Heart left ventricle (tissue), 16 donors: ENCODE measurements at regions of chr19 and their contacts with region 1.

Region 1: GRCh38 chr19:32224371-32225244 is 120.8 kb upstream of the ZNF507 start:
- DNase-seq: peak; percentile 48 to 75 (median 61)
- ATAC-seq: peak in 3 of 4 donors; percentile 83 to 93 (median 93)
- H3K4me3 ChIP-seq: peak overlapping the region in 10 of 12 donors; percentile 16 to 51 (median 36)
- H3K27ac ChIP-seq: no peak overlapping the region
- H3K4me1 ChIP-seq: peaks cover 0 to 9% (median 4%) of the 10 kb centered on the region in 12 donors
- H3K27me3 ChIP-seq: peaks cover 0 to 65% (median 16%) of the 10 kb centered on the region in 9 donors
- CTCF ChIP-seq: peak; percentile 98 to 100 (median 100)
- POLR2A ChIP-seq: no peak

Region 2: GRCh38 chr19:30669329-30670010 is 1555.1 kb before region 1 on chr19:
- intact Hi-C with region 1: loop called in 4 of 10 experiments (anchors 5 kb)
- DNase-seq: peak; percentile 30 to 84 (median 57)
- ATAC-seq: peak in 3 of 4 donors; percentile 12 to 26 (median 21)
- H3K4me3 ChIP-seq: no peak overlapping the region
- H3K27ac ChIP-seq: no peak overlapping the region
- H3K4me1 ChIP-seq: peaks cover 0 to 25% (median 6%) of the 10 kb centered on the region in 12 donors
- H3K27me3 ChIP-seq: peaks cover 0 to 36% (median 11%) of the 10 kb centered on the region in 9 donors
- CTCF ChIP-seq: peak; percentile 61 to 85 (median 81)
- POLR2A ChIP-seq: no peak

Region 3: DNA sequence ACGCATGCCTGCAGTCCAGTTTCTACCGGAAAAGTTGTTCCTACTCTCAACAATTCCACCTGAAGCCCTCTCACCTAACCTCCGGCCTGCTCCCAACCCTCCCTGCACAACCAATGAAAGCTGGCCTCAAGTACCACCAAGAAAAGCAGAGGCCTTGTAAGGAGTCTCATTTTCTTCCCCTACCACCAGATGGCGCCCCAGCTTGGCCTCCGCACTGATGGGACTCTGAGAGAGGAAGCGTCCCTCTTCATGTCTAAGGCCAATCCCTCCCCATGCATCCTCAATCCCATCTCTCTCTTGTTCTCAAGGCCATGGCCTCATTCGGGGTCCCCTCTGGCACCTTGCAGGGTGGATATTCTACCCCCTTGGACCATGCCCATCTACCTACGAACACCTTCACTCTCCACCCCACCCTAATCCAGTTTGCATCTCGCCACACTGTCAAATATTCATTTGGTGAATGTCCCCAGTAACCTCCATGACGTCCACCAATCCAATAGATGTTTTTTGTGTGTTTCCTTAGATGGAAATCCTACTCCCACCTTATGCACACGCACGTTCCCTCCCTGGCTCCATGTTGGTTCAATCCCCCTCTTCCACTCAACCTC is 1439.7 kb before region 1 on chr19:
- intact Hi-C with region 1: loop called in 5 of 10 experiments (anchors 5 to 10 kb)
- DNase-seq: peak; percentile 20 to 69 (median 44)
- ATAC-seq: peak in 3 of 4 donors; percentile 49 to 57 (median 54)
- H3K4me3 ChIP-seq: no peak overlapping the region
- H3K27ac ChIP-seq: no peak overlapping the region
- H3K4me1 ChIP-seq: no peaks in the 10 kb centered on the region
- H3K27me3 ChIP-seq: peaks cover 0 to 3% (median 0%) of the 10 kb centered on the region in 9 donors
- CTCF ChIP-seq: peak; percentile 31 to 74 (median 54)
- POLR2A ChIP-seq: no peak

Region 4: GRCh38 chr19:31349160-31349881 is 875.3 kb before region 1 on chr19 and contains the start of gene TSHZ3:
- intact Hi-C with region 1: loop called in 2 of 10 experiments (anchors 10 kb)
- DNase-seq: peak; percentile 81 to 90 (median 86)
- ATAC-seq: peak; percentile 69 to 86 (median 80)
- H3K4me3 ChIP-seq: peak within 1 kb of the TSS; percentile 75 to 96 (median 86)
- H3K27ac ChIP-seq: peak within 1 kb of the TSS; percentile 79 to 97 (median 93)
- H3K4me1 ChIP-seq: peaks cover 0 to 47% (median 15%) of the 10 kb centered on the region in 12 donors
- H3K27me3 ChIP-seq: peaks cover 0 to 36% (median 17%) of the 10 kb centered on the region in 9 donors
- CTCF ChIP-seq: no peak
- POLR2A ChIP-seq: no peak
- total RNA-seq, gene TSHZ3: 2.0 to 11.5 (median 2.7) TPM

Region 5: DNA sequence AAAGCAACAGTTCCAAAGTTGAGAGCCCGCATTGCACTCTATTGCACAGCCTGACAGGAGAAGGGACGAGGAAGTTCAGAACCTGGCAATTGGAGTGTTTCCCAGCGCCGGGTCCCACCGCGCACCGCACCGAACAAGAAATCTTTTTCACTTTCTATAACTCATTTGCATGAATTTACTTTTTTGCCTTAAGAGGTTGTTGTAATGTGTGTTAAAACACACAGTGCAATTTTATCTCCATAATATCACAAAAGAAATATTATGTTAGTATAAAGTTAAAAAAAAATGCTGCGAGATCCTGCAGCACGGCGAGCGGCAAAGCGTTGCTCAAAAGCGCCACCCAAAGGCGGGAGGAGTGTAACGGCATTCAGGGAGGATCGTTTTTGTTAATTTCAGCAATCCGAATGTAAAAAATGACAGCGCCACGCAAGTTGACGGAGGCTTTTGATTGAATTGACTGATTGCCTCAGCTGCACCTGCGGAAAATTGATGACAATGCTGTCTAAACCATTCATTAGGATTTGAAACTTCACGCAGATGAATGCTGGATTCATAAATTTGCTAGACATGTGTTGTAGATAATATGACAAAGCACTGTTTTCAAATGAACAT is 182.8 kb before region 1 on chr19:
- intact Hi-C with region 1: loop called in 2 of 10 experiments (anchors 10 kb)
- DNase-seq: peak in 4 of 5 donors; percentile 23 to 47 (median 34)
- ATAC-seq: peak in 1 of 4 donors; percentile 34
- H3K4me3 ChIP-seq: peak overlapping the region in 10 of 12 donors; percentile 12 to 54 (median 38)
- H3K27ac ChIP-seq: no peak overlapping the region
- H3K4me1 ChIP-seq: peaks cover 0 to 6% (median 0%) of the 10 kb centered on the region in 12 donors
- H3K27me3 ChIP-seq: peaks cover 0 to 58% (median 7%) of the 10 kb centered on the region in 9 donors
- CTCF ChIP-seq: peak; percentile 48 to 89 (median 70)
- POLR2A ChIP-seq: no peak